ENCODE measurements at regions of chr1 and their contacts with region 1.

Region 1: GRCh38 chr1:201970334-201971159 is 11.9 kb upstream of the RNPEP start:
- DNase-seq: no peak
- ATAC-seq: no peak
- H3K4me3 Mint-ChIP-seq: no peak overlapping the region
- H3K27ac Mint-ChIP-seq: no peak overlapping the region
- H3K4me1 Mint-ChIP-seq: no peaks in the 10 kb centered on the region
- H3K27me3 Mint-ChIP-seq: no peaks in the 10 kb centered on the region
- CTCF ChIP-seq: no peak

Region 2: DNA sequence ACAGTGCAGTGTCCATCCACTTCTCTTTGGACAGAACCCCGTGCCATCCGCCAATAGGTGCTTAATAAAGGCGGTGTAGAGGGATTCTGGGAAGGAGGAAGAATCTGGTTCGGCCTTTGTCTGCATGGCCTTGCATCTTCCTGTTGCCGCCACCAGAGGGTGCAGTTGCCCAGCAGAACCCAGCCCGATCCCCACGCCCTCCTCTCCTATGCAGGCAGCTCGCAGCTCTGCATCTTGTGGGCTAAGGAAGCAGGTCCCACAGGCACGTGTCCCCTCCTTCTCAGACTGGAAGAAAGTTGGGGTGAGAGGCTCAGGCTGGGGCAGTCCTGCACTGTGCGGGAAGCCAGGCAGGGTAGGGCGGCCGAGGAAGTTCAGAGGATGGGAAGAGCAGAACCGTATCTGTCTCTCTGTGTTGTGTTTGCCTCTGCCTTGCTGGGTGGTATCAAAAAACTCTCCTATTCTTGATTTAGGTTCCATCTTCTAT is 410.8 kb before region 1 on chr1:
- CTCF ChIA-PET with region 1: interaction called, 4 read pairs
- POLR2A ChIA-PET with region 1: no interaction called
- intact Hi-C with region 1: loop called (anchors 1 kb)
- DNase-seq: peak; percentile 57
- ATAC-seq: peak; percentile 88
- H3K4me3 Mint-ChIP-seq: no peak overlapping the region
- H3K27ac Mint-ChIP-seq: no peak overlapping the region
- H3K4me1 Mint-ChIP-seq: peaks cover 4% of the 10 kb centered on the region
- H3K27me3 Mint-ChIP-seq: no peaks in the 10 kb centered on the region
- CTCF ChIP-seq: peak; percentile 34

Region 3: DNA sequence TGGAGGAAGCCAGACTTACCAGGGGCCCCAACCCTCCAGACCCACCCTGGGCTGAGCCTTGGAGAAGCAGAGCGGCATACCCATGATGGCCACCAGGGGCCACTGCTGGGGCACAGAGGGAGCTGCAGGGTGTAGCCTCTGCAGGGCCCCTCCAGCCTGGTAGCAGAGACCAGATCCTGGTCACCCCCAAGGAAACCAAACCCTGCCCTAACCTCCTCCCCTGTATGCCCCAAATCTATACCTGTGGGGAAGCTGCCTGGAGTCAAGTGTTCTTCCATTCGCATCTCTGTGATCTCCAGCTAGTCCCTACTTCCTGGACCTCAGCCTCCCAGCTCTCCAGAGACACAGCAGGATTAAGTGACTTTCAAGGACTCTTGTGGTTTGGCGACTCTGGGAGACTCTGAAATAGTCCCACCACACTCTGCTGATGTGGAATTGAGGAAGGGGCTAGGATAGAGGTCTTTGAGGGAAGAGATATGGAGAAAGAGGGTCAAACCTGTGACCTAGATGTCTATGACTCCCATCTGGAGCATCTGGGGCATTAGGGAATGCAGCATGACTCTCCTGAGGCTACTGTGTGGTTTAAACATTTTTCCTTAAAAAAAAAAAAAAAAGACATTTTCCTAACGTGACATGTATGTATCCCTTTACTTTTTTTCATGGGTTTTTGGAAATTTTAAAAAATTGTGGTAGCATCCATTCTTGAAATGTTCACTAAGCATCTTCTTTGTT is 260.8 kb before region 1 on chr1:
- CTCF ChIA-PET with region 1: interaction called, 6 read pairs
- POLR2A ChIA-PET with region 1: no interaction called
- intact Hi-C with region 1: loop called (anchors 1 kb)
- DNase-seq: peak; percentile 60
- ATAC-seq: peak; percentile 97
- H3K4me3 Mint-ChIP-seq: no peak overlapping the region
- H3K27ac Mint-ChIP-seq: no peak overlapping the region
- H3K4me1 Mint-ChIP-seq: no peaks in the 10 kb centered on the region
- H3K27me3 Mint-ChIP-seq: peaks cover 7% of the 10 kb centered on the region
- CTCF ChIP-seq: no peak

Region 4: GRCh38 chr1:201828820-201829774 is 141.4 kb before region 1 on chr1 and contains the start of gene IPO9:
- CTCF ChIA-PET with region 1: no interaction called
- POLR2A ChIA-PET with region 1: no interaction called
- intact Hi-C with region 1: loop called (anchors 1 kb)
- DNase-seq: peak; percentile 95
- ATAC-seq: peak; percentile 94
- H3K4me3 Mint-ChIP-seq: peak within 1 kb of the TSS; percentile 93
- H3K27ac Mint-ChIP-seq: peak within 1 kb of the TSS; percentile 96
- H3K4me1 Mint-ChIP-seq: peaks cover 42% of the 10 kb centered on the region
- H3K27me3 Mint-ChIP-seq: no peaks in the 10 kb centered on the region
- CTCF ChIP-seq: peak; percentile 35
- total RNA-seq, gene IPO9: 45.7 and 48.2 TPM in 2 replicates

Region 5: DNA sequence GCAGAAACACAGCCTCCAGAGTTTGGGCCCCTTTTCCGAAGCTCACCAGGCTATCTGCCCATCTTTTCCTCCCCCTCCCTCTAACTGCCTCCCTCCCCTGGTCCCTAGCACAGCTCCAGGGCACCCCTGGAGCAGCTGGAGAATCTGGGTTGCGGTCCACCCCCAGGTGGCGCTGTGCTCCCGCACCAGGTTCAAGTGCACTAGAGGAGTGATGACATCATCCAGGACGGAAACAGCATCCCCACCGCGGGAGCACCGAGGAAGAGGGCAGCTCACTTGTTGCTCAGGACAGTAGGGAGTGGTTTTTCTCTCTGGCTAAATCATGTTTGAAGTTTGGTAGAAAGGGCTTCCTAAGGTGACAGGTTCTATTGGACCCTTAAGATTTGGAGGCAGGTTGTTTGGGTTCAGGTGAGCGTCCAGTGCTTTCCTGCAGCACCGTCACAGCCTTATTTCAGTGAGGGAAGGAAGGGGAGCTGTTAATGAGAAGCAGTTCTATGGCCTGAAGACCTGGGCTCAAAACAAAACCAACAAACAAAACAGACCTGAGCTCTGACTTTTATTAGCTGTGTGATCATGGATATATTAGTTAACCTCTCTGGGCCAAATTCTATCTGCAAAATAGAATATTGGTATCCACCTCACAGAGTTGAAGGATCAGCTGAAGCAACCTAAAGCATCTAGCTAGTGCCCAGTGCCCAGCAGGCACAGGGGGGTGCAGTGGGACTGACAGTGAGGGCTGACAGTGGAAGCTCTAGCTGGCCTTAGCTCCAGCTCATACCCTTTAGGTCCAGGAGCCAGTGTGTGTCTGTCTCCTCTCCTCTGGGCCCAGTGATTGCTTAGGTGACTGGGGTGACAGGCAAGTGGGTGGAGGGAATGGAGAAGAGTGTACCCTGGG is 74.4 kb before region 1 on chr1:
- CTCF ChIA-PET with region 1: interaction called, 34 read pairs
- POLR2A ChIA-PET with region 1: no interaction called
- intact Hi-C with region 1: loop called (anchors 1 kb)
- DNase-seq: peak; percentile 52
- ATAC-seq: peak; percentile 77
- H3K4me3 Mint-ChIP-seq: peak overlapping the region; percentile 55
- H3K27ac Mint-ChIP-seq: no peak overlapping the region
- H3K4me1 Mint-ChIP-seq: peaks cover 5% of the 10 kb centered on the region
- H3K27me3 Mint-ChIP-seq: peaks cover 27% of the 10 kb centered on the region
- CTCF ChIP-seq: no peak

Region 6: DNA sequence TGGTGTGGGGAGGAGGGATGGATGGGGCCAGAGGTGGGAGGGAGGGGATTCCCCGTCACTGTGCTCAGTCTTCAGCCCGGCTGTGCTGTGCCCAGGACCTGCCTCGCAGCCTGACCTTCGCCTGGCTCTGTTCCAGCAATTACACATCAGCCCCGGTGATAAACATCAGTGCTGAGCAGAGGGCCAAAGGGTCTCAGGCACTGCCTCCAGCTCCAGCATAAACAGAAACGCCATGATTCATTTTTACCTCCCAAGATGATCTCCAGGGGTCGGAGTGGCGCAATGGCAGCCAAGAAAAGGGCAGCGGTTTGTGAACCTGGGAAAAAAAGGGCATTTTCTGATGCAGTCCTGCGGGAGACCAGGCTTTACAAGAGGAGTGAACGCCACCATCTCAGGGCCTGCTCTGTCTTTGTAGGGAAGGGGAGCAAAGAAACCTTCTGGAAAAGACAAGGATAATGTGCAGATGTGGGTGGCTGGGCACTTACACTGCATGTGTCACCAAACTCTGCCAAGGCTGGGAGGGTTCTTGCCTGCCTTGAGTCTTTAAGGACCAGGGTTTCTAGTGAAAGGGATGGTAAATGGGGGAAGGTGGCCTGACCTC is 53.8 kb before region 1 on chr1:
- CTCF ChIA-PET with region 1: no interaction called
- POLR2A ChIA-PET with region 1: no interaction called
- intact Hi-C with region 1: no loop called
- DNase-seq: no peak
- ATAC-seq: no peak
- H3K4me3 Mint-ChIP-seq: no peak overlapping the region
- H3K27ac Mint-ChIP-seq: no peak overlapping the region
- H3K4me1 Mint-ChIP-seq: no peaks in the 10 kb centered on the region
- H3K27me3 Mint-ChIP-seq: peaks cover 11% of the 10 kb centered on the region
- CTCF ChIP-seq: no peak

Region 7: GRCh38 chr1:201947697-201948008 is 22.9 kb before region 1 on chr1:
- CTCF ChIA-PET with region 1: no interaction called
- POLR2A ChIA-PET with region 1: no interaction called
- intact Hi-C with region 1: no loop called
- DNase-seq: no peak
- ATAC-seq: no peak
- H3K4me3 Mint-ChIP-seq: no peak overlapping the region
- H3K27ac Mint-ChIP-seq: no peak overlapping the region
- H3K4me1 Mint-ChIP-seq: peaks cover 11% of the 10 kb centered on the region
- H3K27me3 Mint-ChIP-seq: peaks cover 38% of the 10 kb centered on the region
- CTCF ChIP-seq: no peak

Region 8: GRCh38 chr1:202154766-202155477 is 184.4 kb after region 1 on chr1:
- CTCF ChIA-PET with region 1: no interaction called
- POLR2A ChIA-PET with region 1: no interaction called
- intact Hi-C with region 1: no loop called
- DNase-seq: no peak
- ATAC-seq: peak; percentile 73
- H3K4me3 Mint-ChIP-seq: no peak overlapping the region
- H3K27ac Mint-ChIP-seq: no peak overlapping the region
- H3K4me1 Mint-ChIP-seq: peaks cover 37% of the 10 kb centered on the region
- H3K27me3 Mint-ChIP-seq: no peaks in the 10 kb centered on the region
- CTCF ChIP-seq: no peak

Region 9: GRCh38 chr1:202586018-202586821 is 615.7 kb after region 1 on chr1:
- CTCF ChIA-PET with region 1: no interaction called
- POLR2A ChIA-PET with region 1: no interaction called
- intact Hi-C with region 1: no loop called
- DNase-seq: no peak
- ATAC-seq: no peak
- H3K4me3 Mint-ChIP-seq: no peak overlapping the region
- H3K27ac Mint-ChIP-seq: no peak overlapping the region
- H3K4me1 Mint-ChIP-seq: peaks cover 27% of the 10 kb centered on the region
- H3K27me3 Mint-ChIP-seq: no peaks in the 10 kb centered on the region
- CTCF ChIP-seq: no peak